Right ventricle myocardium inferior (tissue), 1 donor: ENCODE measurements at regions of chr11 and their contacts with region 1.

Region 1: GRCh38 chr11:30143098-30143705 is 87.6 kb upstream of the FSHB start:
- DNase-seq: no peak
- ATAC-seq: no peak

Region 2: GRCh38 chr11:29448246-29448877 is 694.8 kb before region 1 on chr11:
- intact Hi-C with region 1: loop called (anchors 5 kb)
- DNase-seq: no peak
- ATAC-seq: peak; percentile 57

Region 3: DNA sequence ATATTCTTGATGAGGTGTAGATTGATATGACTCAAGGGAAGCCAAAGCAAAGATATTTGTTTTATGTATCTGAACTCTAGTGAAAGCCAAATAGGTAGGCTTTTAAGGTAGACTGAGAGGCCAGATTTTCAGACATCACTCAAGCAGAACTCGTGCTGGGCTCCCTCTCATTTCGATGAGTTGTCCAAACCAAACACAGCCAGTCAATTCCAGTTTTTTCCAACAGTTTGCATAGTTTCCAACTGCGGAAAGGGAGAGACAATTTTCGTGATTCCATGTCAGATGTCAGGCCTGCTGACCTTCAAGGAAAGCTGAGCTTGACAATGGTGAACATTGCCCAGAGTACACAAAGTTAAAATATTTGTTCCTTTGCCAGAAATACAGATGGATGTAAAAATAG is 553.8 kb after region 1 on chr11:
- intact Hi-C with region 1: no loop called
- DNase-seq: no peak
- ATAC-seq: no peak